Esophagus muscularis mucosa (tissue), 4 donors: ENCODE measurements at regions of chr6 and their contacts with region 1.

Region 1: GRCh38 chr6:63352587-63353285 is 33.0 kb upstream of the LGSN start:
- DNase-seq: no peak
- H3K4me3 ChIP-seq: no peak overlapping the region
- H3K27ac ChIP-seq: no peak overlapping the region
- H3K4me1 ChIP-seq: peaks cover 0 to 4% (median 0%) of the 10 kb centered on the region in 4 donors
- H3K27me3 ChIP-seq: no peaks in the 10 kb centered on the region
- CTCF ChIP-seq: peak; percentile 33 to 49 (median 40)
- EP300 ChIP-seq: no peak
- POLR2A ChIP-seq: no peak

Region 2: GRCh38 chr6:63571881-63572732 is 219.4 kb after region 1 on chr6 and contains the starts of genes LOC128125822 and PTP4A1:
- intact Hi-C with region 1: loop called (anchors 10 kb)
- DNase-seq: peak; percentile 99
- H3K4me3 ChIP-seq: peak within 1 kb of the TSS; percentile 89 to 97 (median 94)
- H3K27ac ChIP-seq: peak within 1 kb of the TSS; percentile 100
- H3K4me1 ChIP-seq: peaks cover 4 to 29% (median 24%) of the 10 kb centered on the region in 4 donors
- H3K27me3 ChIP-seq: no peaks in the 10 kb centered on the region
- CTCF ChIP-seq: no peak
- EP300 ChIP-seq: peak; percentile 69
- POLR2A ChIP-seq: peak; percentile 98
- total RNA-seq, gene PTP4A1: 23.7 to 31.3 (median 27.8) TPM

Region 3: DNA sequence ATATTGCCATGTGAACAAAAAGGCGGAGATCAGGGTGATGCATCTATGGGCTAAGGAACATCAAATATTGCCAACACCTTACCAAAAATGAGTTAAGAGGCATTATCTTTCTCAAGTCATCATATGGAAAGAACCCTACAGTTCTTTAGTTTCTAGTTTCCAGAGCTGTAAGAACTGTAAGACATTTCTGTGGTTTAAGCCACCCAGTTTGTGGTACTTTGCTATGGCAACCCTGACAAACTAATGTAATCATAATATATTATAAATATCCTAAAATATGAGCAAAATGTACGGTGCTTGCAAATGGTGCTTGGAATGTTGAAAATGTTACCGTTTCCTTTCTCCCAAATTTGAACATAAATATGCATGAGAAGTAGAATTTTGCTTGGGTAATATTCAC is 632.5 kb after region 1 on chr6:
- intact Hi-C with region 1: no loop called
- DNase-seq: no peak
- H3K4me3 ChIP-seq: no peak overlapping the region
- H3K27ac ChIP-seq: no peak overlapping the region
- H3K4me1 ChIP-seq: no peaks in the 10 kb centered on the region
- H3K27me3 ChIP-seq: no peaks in the 10 kb centered on the region
- CTCF ChIP-seq: no peak
- EP300 ChIP-seq: no peak
- POLR2A ChIP-seq: no peak